ENCODE measurements at regions of chr2 and their contacts with region 1.

Region 1: GRCh38 chr2:143241403-143242088 is 112.3 kb downstream of the ARHGAP15 start:
- DNase-seq: no peak
- ATAC-seq: no peak
- H3K4me3 ChIP-seq: no peak overlapping the region
- H3K4me3 Mint-ChIP-seq: no peak overlapping the region
- H3K27ac ChIP-seq: no peak overlapping the region
- H3K27ac Mint-ChIP-seq: peak overlapping the region; percentile 52 to 64
- H3K4me1 ChIP-seq: peaks cover 14% of the 10 kb centered on the region in 2 experiments
- H3K4me1 Mint-ChIP-seq: peaks cover 28 to 34% (median 32%) of the 10 kb centered on the region in 3 donors
- H3K27me3 ChIP-seq: no peaks in the 10 kb centered on the region
- H3K27me3 Mint-ChIP-seq: no peaks in the 10 kb centered on the region

Region 2: GRCh38 chr2:143051465-143051864 is 190.1 kb before region 1 on chr2:
- CTCF ChIA-PET with region 1: interaction called in 1 of 2 experiments, 13 read pairs
- POLR2A ChIA-PET with region 1: no interaction called
- DNase-seq: no peak
- ATAC-seq: no peak
- H3K4me3 ChIP-seq: no peak overlapping the region
- H3K4me3 Mint-ChIP-seq: no peak overlapping the region
- H3K27ac ChIP-seq: no peak overlapping the region
- H3K27ac Mint-ChIP-seq: no peak overlapping the region
- H3K4me1 ChIP-seq: no peaks in the 10 kb centered on the region
- H3K4me1 Mint-ChIP-seq: no peaks in the 10 kb centered on the region
- H3K27me3 ChIP-seq: no peaks in the 10 kb centered on the region
- H3K27me3 Mint-ChIP-seq: peaks cover 8 to 11% of the 10 kb centered on the region in 2 donors

Measured in T-cell (primary cell).